Sigmoid colon (tissue), 7 donors: ENCODE measurements at regions of chr19 and their contacts with region 1.

Region 1: GRCh38 chr19:1275260-1275975 is at the start of gene FAM174C:
- DNase-seq: peak; percentile 98
- H3K4me3 ChIP-seq: peak within 1 kb of the TSS; percentile 44 to 64 (median 60)
- H3K27ac ChIP-seq: peak within 1 kb of the TSS; percentile 94 to 100 (median 97)
- H3K4me1 ChIP-seq: peaks cover 0 to 62% (median 60%) of the 10 kb centered on the region in 4 donors
- H3K27me3 ChIP-seq: no peaks in the 10 kb centered on the region
- CTCF ChIP-seq: no peak
- EP300 ChIP-seq: peak in 1 of 4 donors; percentile 57
- POLR2A ChIP-seq: peak; percentile 44 to 46
- total RNA-seq, gene FAM174C: 24.7 to 49.3 (median 29.8) TPM

Region 2: DNA sequence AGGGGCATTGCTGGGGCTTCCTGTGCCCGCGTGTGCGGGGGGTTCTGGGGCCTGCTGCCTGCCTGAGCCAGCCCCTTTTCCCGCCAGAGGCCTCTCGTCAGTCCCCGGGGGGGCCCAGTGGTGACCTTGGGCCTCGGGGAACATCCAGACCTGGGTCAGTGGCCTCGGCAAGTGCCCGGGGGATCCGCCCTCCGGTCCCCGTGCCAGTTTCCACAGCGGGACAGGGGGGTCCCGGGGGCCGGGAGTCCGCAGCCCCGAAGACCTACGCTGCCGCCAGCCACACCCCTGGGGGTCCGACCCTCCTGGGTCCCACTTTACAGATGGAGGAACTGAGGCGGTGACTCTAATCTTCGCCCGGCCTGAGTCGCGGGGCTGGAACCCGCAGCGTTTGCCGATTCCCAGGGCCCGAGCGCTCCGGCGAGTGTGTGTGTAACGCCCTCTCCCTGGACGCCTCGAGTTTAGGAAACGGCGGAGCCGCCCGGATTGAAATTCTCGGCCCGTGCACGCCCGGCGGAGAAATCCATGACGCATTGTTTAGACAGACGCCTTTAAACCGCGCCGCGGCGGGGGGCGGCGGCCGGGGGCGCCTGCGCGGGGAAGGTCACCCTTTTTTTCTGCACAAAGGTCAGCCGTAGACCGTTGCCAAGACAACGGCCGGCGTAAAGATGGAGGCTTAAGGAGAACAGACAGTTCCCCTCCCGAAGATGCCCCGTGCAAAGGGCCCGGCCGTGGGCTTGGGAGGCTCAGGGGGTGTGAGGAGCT is 49.6 kb after region 1 on chr19:
- intact Hi-C with region 1: no loop called
- DNase-seq: peak; percentile 81
- H3K4me3 ChIP-seq: peak overlapping the region; percentile 10 to 51 (median 36)
- H3K27ac ChIP-seq: peak overlapping the region in 2 of 4 donors; percentile 20 to 51
- H3K4me1 ChIP-seq: peaks cover 0 to 14% (median 11%) of the 10 kb centered on the region in 4 donors
- H3K27me3 ChIP-seq: peaks cover 0 to 23% (median 13%) of the 10 kb centered on the region in 3 donors
- CTCF ChIP-seq: no peak
- EP300 ChIP-seq: no peak
- POLR2A ChIP-seq: no peak

Region 3: GRCh38 chr19:1355568-1356507 is 80.4 kb after region 1 on chr19:
- intact Hi-C with region 1: loop called (anchors 5 kb)
- DNase-seq: no peak
- H3K4me3 ChIP-seq: peak overlapping the region; percentile 67 to 97 (median 89)
- H3K27ac ChIP-seq: peak overlapping the region; percentile 91 to 99 (median 96)
- H3K4me1 ChIP-seq: peaks cover 0 to 38% (median 36%) of the 10 kb centered on the region in 4 donors
- H3K27me3 ChIP-seq: no peaks in the 10 kb centered on the region
- CTCF ChIP-seq: no peak
- EP300 ChIP-seq: no peak
- POLR2A ChIP-seq: no peak

Region 4: DNA sequence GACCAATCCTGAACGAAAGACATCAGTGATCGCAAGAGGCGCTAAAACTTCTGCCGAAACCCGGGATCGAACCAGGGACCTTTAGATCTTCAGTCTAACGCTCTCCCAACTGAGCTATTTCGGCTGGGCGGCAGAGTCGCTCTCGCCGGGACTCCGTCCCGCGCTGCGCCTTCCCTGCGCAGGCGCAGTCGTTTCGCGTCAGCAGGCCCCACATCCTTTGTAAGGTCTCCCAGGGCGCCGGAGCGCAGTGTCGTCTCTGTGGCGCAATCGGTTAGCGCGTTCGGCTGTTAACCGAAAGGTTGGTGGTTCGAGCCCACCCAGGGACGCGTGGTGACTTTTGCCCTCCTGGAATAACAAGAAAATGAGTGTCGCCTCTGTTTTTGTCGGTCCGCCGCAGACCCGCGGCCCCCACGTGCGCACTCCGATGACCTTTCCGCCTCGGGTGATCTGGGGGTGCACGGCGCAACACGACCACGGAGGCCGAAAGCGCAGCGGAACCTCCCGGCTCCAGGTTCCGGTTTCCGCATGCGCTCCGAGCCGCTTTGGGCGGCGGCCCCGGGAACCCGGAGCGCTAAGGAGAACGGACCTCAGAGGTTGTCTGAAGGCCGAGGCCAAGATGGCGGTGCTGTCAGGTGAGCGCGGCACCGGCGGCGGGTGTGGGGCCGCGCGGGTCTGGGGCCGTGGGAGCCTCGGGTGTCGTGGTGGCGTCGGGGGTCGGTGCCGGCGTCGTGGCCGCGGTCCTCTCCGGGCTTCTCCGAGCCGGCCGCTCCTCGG is 108.1 kb after region 1 on chr19 and contains the start of gene NDUFS7:
- intact Hi-C with region 1: loop called (anchors 5 kb)
- DNase-seq: peak; percentile 96
- H3K4me3 ChIP-seq: peak within 1 kb of the TSS; percentile 81 to 97 (median 86)
- H3K27ac ChIP-seq: peak within 1 kb of the TSS; percentile 93 to 94 (median 93)
- H3K4me1 ChIP-seq: peaks cover 0 to 43% (median 28%) of the 10 kb centered on the region in 4 donors
- H3K27me3 ChIP-seq: no peaks in the 10 kb centered on the region
- CTCF ChIP-seq: peak in 3 of 4 experiments; percentile 11 to 59 (median 39)
- EP300 ChIP-seq: peak in 1 of 4 donors; percentile 20
- POLR2A ChIP-seq: peak; percentile 53 to 62
- total RNA-seq, gene NDUFS7: 99.4 to 156 (median 128) TPM